ENCODE measurements at regions of chr11 and their contacts with region 1.

Region 1: DNA sequence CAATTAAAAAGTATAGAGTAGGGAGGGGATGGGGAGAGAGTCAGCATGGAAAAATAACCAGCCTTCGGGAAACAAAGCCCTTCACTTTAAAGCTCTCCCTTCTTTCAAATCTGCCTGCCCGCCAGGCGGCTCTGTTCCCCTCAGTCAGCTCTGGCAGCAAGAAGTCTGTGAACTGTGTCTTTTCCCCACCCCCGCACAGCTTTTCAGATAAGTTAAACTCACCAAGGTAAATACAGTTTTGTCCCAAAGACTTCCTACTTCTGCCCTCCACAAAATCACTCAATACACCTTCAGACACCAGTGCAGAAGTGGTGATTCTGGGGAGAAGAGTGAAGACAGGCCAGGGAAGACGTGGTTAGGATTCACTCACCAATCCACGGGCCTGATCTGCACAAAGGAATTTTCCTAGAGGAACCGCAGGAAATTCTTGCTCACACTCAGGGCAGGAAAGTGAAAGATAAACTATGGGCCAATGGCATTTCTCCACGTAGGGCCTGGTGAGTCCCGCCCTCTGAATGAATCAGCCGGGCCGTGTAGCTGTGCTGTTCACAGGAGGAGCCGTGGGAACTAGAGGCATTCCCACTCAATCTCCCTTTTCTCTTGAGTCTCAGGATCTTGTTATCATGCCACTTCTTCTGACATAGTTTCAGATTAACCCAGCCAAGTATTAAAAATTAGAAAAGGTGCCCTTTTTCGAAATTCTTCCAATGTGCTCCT is at the start of gene TRIM5:
- DNase-seq: peak; percentile 55 to 93 (median 79)
- ATAC-seq: peak; percentile 86
- H3K4me3 ChIP-seq: peak within 1 kb of the TSS; percentile 73 to 93
- H3K4me3 Mint-ChIP-seq: peak within 1 kb of the TSS; percentile 93
- H3K27ac ChIP-seq: peak within 1 kb of the TSS; percentile 74 to 92
- H3K27ac Mint-ChIP-seq: peak within 1 kb of the TSS; percentile 95
- H3K4me1 ChIP-seq: peaks cover 19% of the 10 kb centered on the region
- H3K4me1 Mint-ChIP-seq: peaks cover 67% of the 10 kb centered on the region
- H3K27me3 ChIP-seq: no peaks in the 10 kb centered on the region
- H3K27me3 Mint-ChIP-seq: no peaks in the 10 kb centered on the region
- CTCF ChIP-seq: peak; percentile 79
- total RNA-seq, gene TRIM5: 3.8 to 6.0 TPM

Region 2: GRCh38 chr11:5129457-5129877 is 555.3 kb before region 1 on chr11:
- CTCF ChIA-PET with region 1: no interaction called
- POLR2A ChIA-PET with region 1: no interaction called
- intact Hi-C with region 1: loop called in 1 of 2 experiments (anchors 5 kb)
- DNase-seq: no peak
- ATAC-seq: no peak
- H3K4me3 ChIP-seq: no peak overlapping the region
- H3K4me3 Mint-ChIP-seq: no peak overlapping the region
- H3K27ac ChIP-seq: no peak overlapping the region
- H3K27ac Mint-ChIP-seq: no peak overlapping the region
- H3K4me1 ChIP-seq: no peaks in the 10 kb centered on the region
- H3K4me1 Mint-ChIP-seq: no peaks in the 10 kb centered on the region
- H3K27me3 ChIP-seq: no peaks in the 10 kb centered on the region
- H3K27me3 Mint-ChIP-seq: peaks cover 6% of the 10 kb centered on the region
- CTCF ChIP-seq: no peak

Region 3: GRCh38 chr11:5591613-5592012 is 93.2 kb before region 1 on chr11:
- CTCF ChIA-PET with region 1: no interaction called
- POLR2A ChIA-PET with region 1: no interaction called
- intact Hi-C with region 1: no loop called
- DNase-seq: no peak
- ATAC-seq: no peak
- H3K4me3 ChIP-seq: no peak overlapping the region
- H3K4me3 Mint-ChIP-seq: no peak overlapping the region
- H3K27ac ChIP-seq: no peak overlapping the region
- H3K27ac Mint-ChIP-seq: no peak overlapping the region
- H3K4me1 ChIP-seq: no peaks in the 10 kb centered on the region
- H3K4me1 Mint-ChIP-seq: peaks cover 2% of the 10 kb centered on the region
- H3K27me3 ChIP-seq: no peaks in the 10 kb centered on the region
- H3K27me3 Mint-ChIP-seq: peaks cover 2% of the 10 kb centered on the region
- CTCF ChIP-seq: no peak

Region 4: GRCh38 chr11:5703741-5704536 is 19.1 kb after region 1 on chr11:
- CTCF ChIA-PET with region 1: interaction called, 14 read pairs
- POLR2A ChIA-PET with region 1: interaction called, 8 read pairs
- intact Hi-C with region 1: loop called (anchors 2 kb)
- DNase-seq: no peak
- ATAC-seq: no peak
- H3K4me3 ChIP-seq: no peak overlapping the region
- H3K4me3 Mint-ChIP-seq: no peak overlapping the region
- H3K27ac ChIP-seq: peak overlapping the region in 1 of 2 experiments; percentile 9
- H3K27ac Mint-ChIP-seq: peak overlapping the region; percentile 73
- H3K4me1 ChIP-seq: peaks cover 21% of the 10 kb centered on the region
- H3K4me1 Mint-ChIP-seq: peaks cover 45% of the 10 kb centered on the region
- H3K27me3 ChIP-seq: no peaks in the 10 kb centered on the region
- H3K27me3 Mint-ChIP-seq: no peaks in the 10 kb centered on the region
- CTCF ChIP-seq: no peak

Region 5: DNA sequence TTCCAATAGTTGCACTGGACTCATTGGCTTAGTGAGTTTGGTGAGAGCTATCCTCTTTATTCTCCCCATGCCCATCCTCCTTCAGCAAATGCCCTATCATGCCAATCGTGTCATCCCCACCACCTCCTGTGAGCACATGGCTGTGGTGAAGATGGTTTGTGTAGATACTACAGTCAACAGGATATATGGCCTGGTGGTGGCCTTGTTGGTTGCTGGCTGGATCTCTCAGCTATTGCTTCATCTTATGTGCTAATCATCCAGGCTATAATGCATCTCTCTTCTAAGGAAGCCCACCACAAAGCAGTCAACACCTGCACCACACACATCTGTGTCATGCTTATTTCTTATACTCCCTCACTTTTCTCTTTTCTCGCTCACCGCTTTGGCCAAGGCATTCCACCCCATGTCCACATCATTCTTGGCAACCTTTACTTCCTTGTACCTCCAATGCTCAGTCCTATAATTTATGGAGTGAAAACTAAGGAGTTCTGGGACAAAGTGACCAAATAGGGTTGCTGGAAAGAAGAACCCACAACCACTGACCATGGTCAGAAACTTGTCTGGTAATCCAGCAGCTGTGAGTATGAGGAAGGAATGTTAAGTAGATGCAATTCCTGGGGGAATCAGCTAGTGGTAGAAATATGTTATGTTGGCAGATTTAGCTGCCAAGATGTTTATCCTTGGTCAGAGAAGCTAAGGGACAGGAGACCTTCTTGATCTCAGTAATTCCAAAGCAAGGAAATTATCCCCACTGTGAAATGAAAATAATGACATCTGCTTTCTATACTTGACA is 35.1 kb after region 1 on chr11:
- CTCF ChIA-PET with region 1: interaction called, 13 read pairs
- POLR2A ChIA-PET with region 1: interaction called, 3 read pairs
- intact Hi-C with region 1: no loop called
- DNase-seq: no peak
- ATAC-seq: no peak
- H3K4me3 ChIP-seq: no peak overlapping the region
- H3K4me3 Mint-ChIP-seq: no peak overlapping the region
- H3K27ac ChIP-seq: no peak overlapping the region
- H3K27ac Mint-ChIP-seq: peak overlapping the region; percentile 41
- H3K4me1 ChIP-seq: no peaks in the 10 kb centered on the region
- H3K4me1 Mint-ChIP-seq: no peaks in the 10 kb centered on the region
- H3K27me3 ChIP-seq: no peaks in the 10 kb centered on the region
- H3K27me3 Mint-ChIP-seq: no peaks in the 10 kb centered on the region
- CTCF ChIP-seq: no peak

Region 6: GRCh38 chr11:5791165-5791564 is 106.4 kb after region 1 on chr11 and contains the start of gene OR52N1:
- CTCF ChIA-PET with region 1: no interaction called
- POLR2A ChIA-PET with region 1: no interaction called
- intact Hi-C with region 1: no loop called
- DNase-seq: no peak
- ATAC-seq: no peak
- H3K4me3 ChIP-seq: no peak within 1 kb of the TSS
- H3K4me3 Mint-ChIP-seq: no peak within 1 kb of the TSS
- H3K27ac ChIP-seq: no peak within 1 kb of the TSS
- H3K27ac Mint-ChIP-seq: no peak within 1 kb of the TSS
- H3K4me1 ChIP-seq: no peaks in the 10 kb centered on the region
- H3K4me1 Mint-ChIP-seq: no peaks in the 10 kb centered on the region
- H3K27me3 ChIP-seq: no peaks in the 10 kb centered on the region
- H3K27me3 Mint-ChIP-seq: peaks cover 15% of the 10 kb centered on the region
- CTCF ChIP-seq: no peak
- total RNA-seq, gene OR52N1: not detected

Region 7: GRCh38 chr11:5929571-5929970 is 244.8 kb after region 1 on chr11:
- CTCF ChIA-PET with region 1: no interaction called
- POLR2A ChIA-PET with region 1: no interaction called
- intact Hi-C with region 1: no loop called
- DNase-seq: no peak
- ATAC-seq: no peak
- H3K4me3 ChIP-seq: no peak overlapping the region
- H3K4me3 Mint-ChIP-seq: no peak overlapping the region
- H3K27ac ChIP-seq: no peak overlapping the region
- H3K27ac Mint-ChIP-seq: no peak overlapping the region
- H3K4me1 ChIP-seq: no peaks in the 10 kb centered on the region
- H3K4me1 Mint-ChIP-seq: no peaks in the 10 kb centered on the region
- H3K27me3 ChIP-seq: no peaks in the 10 kb centered on the region
- H3K27me3 Mint-ChIP-seq: no peaks in the 10 kb centered on the region
- CTCF ChIP-seq: no peak

Region 8: GRCh38 chr11:6030708-6031405 is 346.1 kb after region 1 on chr11 and contains the start of gene OR56A1:
- CTCF ChIA-PET with region 1: no interaction called
- POLR2A ChIA-PET with region 1: no interaction called
- intact Hi-C with region 1: no loop called
- DNase-seq: no peak
- ATAC-seq: no peak
- H3K4me3 ChIP-seq: no peak within 1 kb of the TSS
- H3K4me3 Mint-ChIP-seq: no peak within 1 kb of the TSS
- H3K27ac ChIP-seq: no peak within 1 kb of the TSS
- H3K27ac Mint-ChIP-seq: no peak within 1 kb of the TSS
- H3K4me1 ChIP-seq: no peaks in the 10 kb centered on the region
- H3K4me1 Mint-ChIP-seq: no peaks in the 10 kb centered on the region
- H3K27me3 ChIP-seq: peaks cover 0 to 2% of the 10 kb centered on the region in 2 experiments
- H3K27me3 Mint-ChIP-seq: peaks cover 16% of the 10 kb centered on the region
- CTCF ChIP-seq: no peak
- total RNA-seq, gene OR56A1: not detected

Region 9: DNA sequence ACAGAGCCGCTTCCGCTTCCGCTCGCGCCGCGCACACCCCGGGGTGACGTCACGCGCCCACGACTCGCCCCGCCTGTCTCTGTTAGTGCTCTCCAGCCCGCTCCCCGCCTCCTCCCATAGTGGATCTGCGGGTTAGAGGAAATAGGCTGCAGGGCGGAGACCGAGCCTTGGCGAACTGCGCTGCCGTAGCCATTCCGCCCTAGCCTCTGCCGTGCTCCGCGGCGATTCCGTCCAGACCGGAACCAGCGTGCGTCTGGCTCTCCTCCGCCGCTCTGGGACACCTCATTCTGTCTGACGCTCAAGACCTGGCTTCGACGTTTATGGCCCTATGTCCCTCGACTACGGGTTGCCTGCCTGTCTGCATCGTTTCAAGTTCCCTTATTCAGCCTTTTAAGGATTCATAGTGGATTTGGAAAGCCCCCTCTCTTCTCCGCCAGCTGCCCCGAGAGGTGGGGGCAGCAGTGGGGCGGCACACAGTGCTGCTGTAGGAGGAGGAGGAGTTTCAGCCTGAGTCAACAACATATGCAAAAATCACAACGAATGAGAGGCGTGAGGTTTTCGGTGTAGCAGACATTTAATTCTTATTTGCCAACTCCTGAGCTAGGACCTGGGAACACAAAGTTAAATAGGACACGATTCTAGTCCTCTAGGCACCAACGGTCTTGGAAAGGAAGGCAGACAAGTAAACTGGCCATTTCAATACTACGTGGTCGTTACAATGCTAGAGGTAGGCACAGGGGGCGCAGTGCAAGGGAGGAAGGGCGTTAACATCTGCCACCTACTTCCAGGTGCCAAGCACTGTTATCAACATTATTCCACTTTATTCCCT is 927.6 kb after region 1 on chr11 and contains the start of gene TAF10:
- CTCF ChIA-PET with region 1: no interaction called
- POLR2A ChIA-PET with region 1: no interaction called
- intact Hi-C with region 1: loop called in 1 of 2 experiments (anchors 10 kb)
- DNase-seq: peak; percentile 85 to 98 (median 97)
- ATAC-seq: peak; percentile 89
- H3K4me3 ChIP-seq: peak within 1 kb of the TSS; percentile 78 to 79
- H3K4me3 Mint-ChIP-seq: peak within 1 kb of the TSS; percentile 92
- H3K27ac ChIP-seq: peak within 1 kb of the TSS; percentile 96 to 98
- H3K27ac Mint-ChIP-seq: peak within 1 kb of the TSS; percentile 95
- H3K4me1 ChIP-seq: peaks cover 33% of the 10 kb centered on the region
- H3K4me1 Mint-ChIP-seq: peaks cover 46% of the 10 kb centered on the region
- H3K27me3 ChIP-seq: no peaks in the 10 kb centered on the region
- H3K27me3 Mint-ChIP-seq: no peaks in the 10 kb centered on the region
- CTCF ChIP-seq: peak; percentile 49
- total RNA-seq, gene TAF10: 158 to 161 TPM